Mammary epithelial cell (primary cell): ENCODE measurements at regions of chr3 and their contacts with region 1.

Region 1: DNA sequence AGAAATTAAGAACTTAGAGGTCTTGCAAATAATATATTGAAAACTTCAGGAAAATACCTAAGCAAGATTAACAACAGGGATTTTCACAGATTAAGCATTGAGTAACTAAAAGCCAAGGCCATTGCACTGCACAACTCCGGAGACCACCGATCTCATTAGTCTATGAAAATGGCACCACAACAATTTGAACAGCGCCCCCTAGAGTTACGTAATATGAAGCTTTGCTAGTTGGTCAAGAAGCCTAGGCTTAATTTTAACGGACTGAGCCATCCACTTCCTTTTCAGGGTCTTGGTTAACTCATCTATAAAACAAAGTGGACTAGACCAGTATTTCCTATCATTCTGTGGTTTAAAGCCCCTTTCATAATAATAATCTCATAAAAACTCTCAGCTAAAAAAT is 24.8 kb downstream of the TMEM212 start:
- DNase-seq: no peak
- H3K4me3 ChIP-seq: no peak overlapping the region
- H3K27ac ChIP-seq: no peak overlapping the region
- H3K4me1 ChIP-seq: no peaks in the 10 kb centered on the region
- H3K27me3 ChIP-seq: no peaks in the 10 kb centered on the region
- CTCF ChIP-seq: peak; percentile 18 to 31

Region 2: GRCh38 chr3:171736556-171736955 is 131.4 kb before region 1 on chr3:
- CTCF ChIA-PET with region 1: no interaction called
- dilution Hi-C with region 1: no loop called
- in situ Hi-C with region 1: no loop called
- intact Hi-C with region 1: no loop called
- DNase-seq: no peak
- H3K4me3 ChIP-seq: no peak overlapping the region
- H3K27ac ChIP-seq: no peak overlapping the region
- H3K4me1 ChIP-seq: no peaks in the 10 kb centered on the region
- H3K27me3 ChIP-seq: no peaks in the 10 kb centered on the region
- CTCF ChIP-seq: no peak

Region 3: DNA sequence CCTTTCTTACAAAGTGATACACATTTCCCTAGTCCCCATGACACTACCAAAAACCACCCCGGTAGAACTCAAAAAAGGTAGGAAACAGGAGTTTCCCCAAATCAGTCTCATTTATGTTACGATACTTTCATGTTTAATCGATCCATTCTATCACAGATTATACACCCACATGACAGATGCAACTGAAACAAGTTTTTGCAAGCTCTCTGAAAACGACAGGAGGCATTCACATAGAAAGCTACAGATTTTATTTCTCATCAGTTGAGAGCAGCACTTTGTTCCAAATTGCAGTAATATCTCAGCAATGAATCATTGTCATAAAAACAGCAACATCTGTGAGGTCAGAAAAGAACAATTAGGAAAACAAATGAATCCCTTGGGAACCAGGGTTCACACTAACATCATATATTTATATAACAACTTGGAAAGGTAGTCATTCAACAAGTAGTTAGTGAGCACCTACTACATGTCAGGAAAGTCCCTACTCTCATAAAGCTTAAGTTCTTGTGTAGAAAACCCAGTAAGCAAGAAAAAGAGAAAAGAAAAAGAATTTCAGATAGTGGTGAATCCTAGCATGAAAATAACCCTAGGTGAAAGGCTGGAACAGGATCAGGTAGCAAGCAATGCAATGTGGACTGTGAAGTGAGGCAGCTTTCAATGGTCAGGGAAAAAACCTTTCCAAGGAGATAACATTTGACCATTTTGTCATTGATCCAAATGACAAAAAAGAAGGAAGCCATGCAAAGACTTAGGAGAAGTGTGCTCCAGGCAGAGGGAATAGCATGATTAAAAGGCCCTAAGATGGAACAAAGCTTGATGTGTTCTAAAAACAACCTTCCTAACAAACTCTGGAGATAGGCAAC is 66.0 kb before region 1 on chr3:
- CTCF ChIA-PET with region 1: no interaction called
- dilution Hi-C with region 1: loop called (anchors 5 kb)
- in situ Hi-C with region 1: no loop called
- intact Hi-C with region 1: no loop called
- DNase-seq: peak; percentile 97
- H3K4me3 ChIP-seq: no peak overlapping the region
- H3K27ac ChIP-seq: peak overlapping the region; percentile 95
- H3K4me1 ChIP-seq: peaks cover 40% of the 10 kb centered on the region
- H3K27me3 ChIP-seq: no peaks in the 10 kb centered on the region
- CTCF ChIP-seq: no peak

Region 4: GRCh38 chr3:171980578-171981270 is 112.7 kb after region 1 on chr3:
- CTCF ChIA-PET with region 1: no interaction called
- dilution Hi-C with region 1: no loop called
- in situ Hi-C with region 1: no loop called
- intact Hi-C with region 1: no loop called
- DNase-seq: no peak
- H3K4me3 ChIP-seq: no peak overlapping the region
- H3K27ac ChIP-seq: no peak overlapping the region
- H3K4me1 ChIP-seq: no peaks in the 10 kb centered on the region
- H3K27me3 ChIP-seq: no peaks in the 10 kb centered on the region
- CTCF ChIP-seq: no peak